ENCODE measurements at regions of chr6 and their contacts with region 1.

Region 1: DNA sequence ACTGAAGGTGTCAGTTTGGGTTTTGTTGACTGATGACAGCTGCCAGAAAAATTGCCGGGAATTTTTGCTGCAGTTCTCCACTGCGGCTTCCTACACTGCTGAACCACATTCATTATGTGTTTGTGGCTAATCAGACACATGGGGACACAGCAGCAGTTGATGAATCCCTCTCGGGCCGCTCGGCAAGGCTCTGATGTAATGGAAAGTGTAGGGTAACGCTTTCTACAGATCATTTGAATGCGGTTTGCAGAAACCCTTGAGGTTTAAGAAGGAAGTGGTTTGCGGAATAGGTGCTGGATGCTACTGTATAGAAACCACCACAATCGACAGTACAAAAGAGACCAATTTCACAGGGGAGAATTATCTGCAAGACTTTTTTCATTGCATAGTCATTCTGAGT is 138.7 kb upstream of the SASH1 start:
- DNase-seq: no peak

Region 2: DNA sequence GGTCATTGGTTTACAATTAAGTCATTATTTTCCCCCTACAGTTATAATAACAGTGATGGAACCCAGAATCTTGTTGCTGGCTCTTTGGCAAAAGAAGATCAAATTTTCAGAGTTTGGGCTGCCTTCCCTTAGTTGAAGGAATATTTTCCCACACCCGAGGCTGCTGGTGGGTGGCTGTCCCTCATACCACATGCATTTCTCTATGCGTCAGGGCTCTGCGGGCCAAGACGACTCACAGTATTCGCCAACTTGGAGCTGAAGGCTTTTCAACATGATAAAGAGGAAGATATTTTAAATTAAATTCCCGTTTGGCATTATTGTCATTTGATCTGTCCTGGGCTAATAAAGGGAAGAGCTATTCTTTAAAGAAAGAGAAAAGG is 36.5 kb after region 1 on chr6:
- intact Hi-C with region 1: loop called in 1 of 2 experiments (anchors 1 kb)
- DNase-seq: no peak

Measured in posterior vena cava (tissue), 2 donors.